Left lung (tissue), 14 donors: ENCODE measurements at regions of chr4 and their contacts with region 1.

Region 1: GRCh38 chr4:77959566-77960338 is 97.1 kb downstream of the MRPL1 start:
- DNase-seq: peak in 2 of 4 donors; percentile 30 to 66
- ATAC-seq: peak; percentile 68
- H3K4me3 ChIP-seq: no peak overlapping the region
- H3K27ac ChIP-seq: no peak overlapping the region
- H3K4me1 ChIP-seq: peaks cover 0 to 5% of the 10 kb centered on the region in 2 donors
- H3K27me3 ChIP-seq: no peaks in the 10 kb centered on the region
- CTCF ChIP-seq: peak; percentile 36 to 62

Region 2: DNA sequence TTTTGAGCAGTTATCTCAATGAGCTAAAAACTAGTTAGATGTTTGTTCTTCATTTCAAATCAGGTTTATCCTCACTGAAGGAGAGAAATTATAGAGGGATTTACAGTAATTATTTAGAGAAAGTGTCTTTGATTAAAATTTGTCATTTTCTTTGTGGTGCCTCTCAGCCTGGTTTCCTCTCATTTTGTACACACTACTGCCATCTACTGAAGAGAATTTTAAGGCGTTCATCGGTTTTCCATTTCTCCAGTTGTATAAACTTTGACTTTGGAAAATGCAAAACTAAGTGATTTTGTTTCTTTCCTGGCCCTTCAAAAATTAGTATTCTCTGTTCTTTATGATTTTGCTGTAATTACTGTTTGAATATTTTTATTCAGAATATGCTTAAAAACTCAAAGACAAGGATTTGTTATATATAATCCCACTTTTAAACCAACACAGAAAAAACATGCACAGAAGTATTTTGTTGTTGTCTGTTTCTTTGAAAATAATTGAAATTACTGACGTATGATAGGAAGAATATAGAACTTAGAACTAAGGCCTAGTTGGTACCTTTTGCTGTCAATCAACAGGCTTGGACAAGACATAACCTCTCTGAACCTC is 557.4 kb after region 1 on chr4:
- intact Hi-C with region 1: loop called in 1 of 2 experiments (anchors 10 kb)
- DNase-seq: peak in 1 of 4 donors; percentile 51
- ATAC-seq: peak; percentile 70
- H3K4me3 ChIP-seq: no peak overlapping the region
- H3K27ac ChIP-seq: no peak overlapping the region
- H3K4me1 ChIP-seq: peaks cover 0 to 12% of the 10 kb centered on the region in 2 donors
- H3K27me3 ChIP-seq: no peaks in the 10 kb centered on the region
- CTCF ChIP-seq: peak; percentile 42 to 47